Mammary epithelial cell (primary cell): ENCODE measurements at regions of chr11 and their contacts with region 1.

Region 1: GRCh38 chr11:113289431-113290187 is 24.8 kb upstream of the TTC12 start:
- DNase-seq: peak; percentile 41
- H3K4me3 ChIP-seq: no peak overlapping the region
- H3K27ac ChIP-seq: no peak overlapping the region
- H3K4me1 ChIP-seq: no peaks in the 10 kb centered on the region
- H3K27me3 ChIP-seq: peaks cover 2% of the 10 kb centered on the region
- CTCF ChIP-seq: peak; percentile 97 to 99

Region 2: DNA sequence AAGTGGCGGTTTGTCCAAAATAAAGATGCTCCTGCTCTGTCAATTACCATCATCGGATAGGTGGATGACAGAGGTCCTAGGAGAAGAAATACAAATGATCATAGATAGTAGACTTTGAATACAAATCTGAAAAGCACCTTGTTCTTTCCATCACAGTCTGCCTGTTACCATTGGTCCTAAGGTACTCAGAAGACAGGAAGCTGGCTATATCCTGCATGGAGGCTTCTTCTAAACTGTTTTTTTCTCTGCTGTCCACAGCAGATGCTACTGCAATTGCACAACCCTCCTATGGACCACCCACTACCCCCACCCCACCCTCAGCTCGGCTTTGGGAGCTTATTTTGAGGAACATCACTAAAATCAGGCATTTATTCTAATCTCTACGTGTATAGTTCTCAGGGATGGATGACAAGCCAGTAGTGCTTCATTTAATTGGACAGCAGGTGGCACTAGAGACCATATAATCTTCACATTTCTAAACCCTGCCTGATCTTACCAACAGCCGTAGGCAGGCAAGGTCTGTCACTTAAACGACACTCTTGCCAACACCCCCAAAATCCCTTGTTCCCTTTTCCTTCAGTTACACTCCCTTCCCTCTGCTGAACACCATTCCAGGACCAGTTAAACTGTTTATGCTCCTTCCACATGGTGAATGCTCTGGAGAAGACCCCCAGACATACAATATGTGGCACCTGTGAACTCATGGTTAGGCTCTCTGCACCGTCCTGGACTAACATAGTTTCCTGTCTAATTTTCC is 1070.0 kb before region 1 on chr11:
- CTCF ChIA-PET with region 1: no interaction called
- dilution Hi-C with region 1: no loop called
- in situ Hi-C with region 1: no loop called
- intact Hi-C with region 1: loop called (anchors 2 kb)
- DNase-seq: peak; percentile 53
- H3K4me3 ChIP-seq: no peak overlapping the region
- H3K27ac ChIP-seq: no peak overlapping the region
- H3K4me1 ChIP-seq: peaks cover 6% of the 10 kb centered on the region
- H3K27me3 ChIP-seq: no peaks in the 10 kb centered on the region
- CTCF ChIP-seq: peak; percentile 63 to 64

Region 3: GRCh38 chr11:112588252-112588694 is 701.3 kb before region 1 on chr11:
- CTCF ChIA-PET with region 1: no interaction called
- dilution Hi-C with region 1: no loop called
- in situ Hi-C with region 1: loop called (anchors 10 kb)
- intact Hi-C with region 1: loop called (anchors 1 kb)
- DNase-seq: peak; percentile 74
- H3K4me3 ChIP-seq: no peak overlapping the region
- H3K27ac ChIP-seq: no peak overlapping the region
- H3K4me1 ChIP-seq: no peaks in the 10 kb centered on the region
- H3K27me3 ChIP-seq: no peaks in the 10 kb centered on the region
- CTCF ChIP-seq: peak; percentile 52 to 73

Region 4: GRCh38 chr11:112942966-112943643 is 346.5 kb before region 1 on chr11:
- CTCF ChIA-PET with region 1: interaction called, 12 read pairs
- dilution Hi-C with region 1: no loop called
- in situ Hi-C with region 1: no loop called
- intact Hi-C with region 1: no loop called
- DNase-seq: no peak
- H3K4me3 ChIP-seq: no peak overlapping the region
- H3K27ac ChIP-seq: no peak overlapping the region
- H3K4me1 ChIP-seq: no peaks in the 10 kb centered on the region
- H3K27me3 ChIP-seq: peaks cover 16% of the 10 kb centered on the region
- CTCF ChIP-seq: no peak

Region 5: DNA sequence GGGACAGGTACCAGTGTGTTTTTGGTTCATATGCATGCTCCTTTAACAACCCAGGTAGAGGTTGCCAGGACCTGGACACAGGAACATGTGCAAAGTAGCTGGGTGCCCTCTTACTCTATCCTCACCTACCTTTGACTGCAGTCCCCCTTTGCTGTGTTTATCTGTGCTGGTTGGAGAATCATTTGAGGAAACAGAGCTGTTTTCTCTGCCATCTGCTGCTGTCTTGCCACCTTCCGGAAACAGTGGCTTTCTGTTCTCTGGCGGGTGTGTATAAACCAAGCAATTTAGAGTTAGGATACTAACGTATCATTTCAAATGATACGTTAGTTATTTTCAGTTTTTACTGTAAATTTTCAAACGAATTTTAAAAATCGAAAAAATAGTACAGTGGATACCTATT is 147.1 kb before region 1 on chr11:
- CTCF ChIA-PET with region 1: interaction called, 4 read pairs
- dilution Hi-C with region 1: no loop called
- in situ Hi-C with region 1: no loop called
- intact Hi-C with region 1: loop called (anchors 5 kb)
- DNase-seq: no peak
- H3K4me3 ChIP-seq: no peak overlapping the region
- H3K27ac ChIP-seq: no peak overlapping the region
- H3K4me1 ChIP-seq: no peaks in the 10 kb centered on the region
- H3K27me3 ChIP-seq: no peaks in the 10 kb centered on the region
- CTCF ChIP-seq: no peak

Region 6: DNA sequence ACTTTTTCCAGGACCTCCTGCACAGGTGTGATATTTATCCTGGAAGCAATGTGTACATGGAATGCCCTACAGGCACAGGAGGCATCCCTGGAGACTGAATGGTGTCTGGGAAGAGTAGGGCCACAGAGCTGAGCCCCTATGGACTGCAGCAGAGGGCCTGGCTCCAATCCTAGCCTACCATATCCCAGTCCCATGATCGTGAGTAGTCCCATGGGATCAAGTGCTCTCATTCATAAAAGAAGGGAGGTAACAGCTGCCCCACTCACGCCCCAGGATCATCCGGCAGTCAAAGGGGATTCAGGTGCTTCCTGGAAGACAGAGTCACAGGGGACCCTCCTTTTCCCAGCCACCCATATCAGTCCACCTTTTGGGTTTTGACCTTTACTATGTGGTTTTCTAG is 121.9 kb after region 1 on chr11:
- CTCF ChIA-PET with region 1: no interaction called
- dilution Hi-C with region 1: no loop called
- in situ Hi-C with region 1: no loop called
- intact Hi-C with region 1: no loop called
- DNase-seq: no peak
- H3K4me3 ChIP-seq: no peak overlapping the region
- H3K27ac ChIP-seq: no peak overlapping the region
- H3K4me1 ChIP-seq: no peaks in the 10 kb centered on the region
- H3K27me3 ChIP-seq: no peaks in the 10 kb centered on the region
- CTCF ChIP-seq: no peak

Region 7: GRCh38 chr11:113721462-113722066 is 432.0 kb after region 1 on chr11:
- CTCF ChIA-PET with region 1: no interaction called
- dilution Hi-C with region 1: no loop called
- in situ Hi-C with region 1: no loop called
- intact Hi-C with region 1: no loop called
- DNase-seq: peak; percentile 29
- H3K4me3 ChIP-seq: no peak overlapping the region
- H3K27ac ChIP-seq: no peak overlapping the region
- H3K4me1 ChIP-seq: peaks cover 13% of the 10 kb centered on the region
- H3K27me3 ChIP-seq: no peaks in the 10 kb centered on the region
- CTCF ChIP-seq: no peak